ENCODE measurements at regions of chr1 and their contacts with region 1.

Region 1: GRCh38 chr1:214446772-214447556 is 104.4 kb downstream of the PTPN14 start:
- DNase-seq: peak; percentile 62 to 82
- H3K4me3 ChIP-seq: peak overlapping the region in 1 of 4 experiments; percentile 29; a peak in 2 of 8 replicates
- H3K27ac ChIP-seq: peak overlapping the region; percentile 86
- H3K4me1 ChIP-seq: peaks cover 1 to 25% (median 9%) of the 10 kb centered on the region in 4 experiments; a peak in 5 of 7 replicates
- H3K27me3 ChIP-seq: no peaks in the 10 kb centered on the region
- CTCF ChIP-seq: no peak
- EP300 ChIP-seq: peak in 1 of 2 experiments; percentile 85; a peak in 1 of 3 replicates
- POLR2A ChIP-seq: peak; percentile 65 to 91
- RAD21 ChIP-seq: peak in 1 of 2 experiments; percentile 18; a peak in 1 of 4 replicates

Region 2: GRCh38 chr1:214404154-214404553 is 42.8 kb before region 1 on chr1:
- CTCF ChIA-PET with region 1: interaction called, 21 read pairs
- POLR2A ChIA-PET with region 1: interaction called, 7 read pairs
- DNase-seq: no peak
- H3K4me3 ChIP-seq: no peak overlapping the region
- H3K27ac ChIP-seq: no peak overlapping the region
- H3K4me1 ChIP-seq: peaks cover 6 to 13% (median 10%) of the 10 kb centered on the region in 4 experiments
- H3K27me3 ChIP-seq: no peaks in the 10 kb centered on the region
- CTCF ChIP-seq: no peak
- EP300 ChIP-seq: no peak
- POLR2A ChIP-seq: no peak
- RAD21 ChIP-seq: no peak

Region 3: DNA sequence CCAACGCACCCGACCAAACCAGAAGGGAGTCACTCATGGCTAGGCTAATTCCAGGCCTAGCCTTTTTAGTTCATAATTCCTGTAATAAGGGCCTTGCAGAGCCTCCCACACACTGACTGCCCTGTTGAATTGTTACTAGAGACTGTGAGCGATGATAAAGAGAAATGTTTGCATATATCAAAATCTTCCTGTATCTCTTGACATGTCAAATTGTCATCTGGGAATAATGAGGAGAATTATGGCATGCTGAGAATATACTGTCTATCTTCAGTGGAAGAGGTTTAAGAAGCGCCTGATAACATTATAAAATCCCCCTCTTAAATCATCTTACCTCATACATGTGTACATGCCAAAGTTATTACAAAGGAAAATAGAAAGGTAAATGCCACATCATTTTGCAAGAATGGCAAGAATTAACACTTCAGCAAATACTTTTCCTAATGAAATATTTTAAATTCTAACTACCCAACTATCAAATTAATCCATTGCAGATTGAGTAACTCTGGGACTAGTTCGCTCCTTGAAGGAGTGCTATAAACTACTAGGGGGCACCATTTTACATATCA is 300.2 kb after region 1 on chr1:
- CTCF ChIA-PET with region 1: no interaction called
- POLR2A ChIA-PET with region 1: no interaction called
- DNase-seq: no peak
- H3K4me3 ChIP-seq: no peak overlapping the region
- H3K27ac ChIP-seq: no peak overlapping the region
- H3K4me1 ChIP-seq: no peaks in the 10 kb centered on the region
- H3K27me3 ChIP-seq: no peaks in the 10 kb centered on the region
- CTCF ChIP-seq: no peak
- EP300 ChIP-seq: no peak
- POLR2A ChIP-seq: no peak
- RAD21 ChIP-seq: no peak

Measured in H1 (cell line).